Mammary epithelial cell (primary cell): ENCODE measurements at regions of chr9 and their contacts with region 1.

Region 1: DNA sequence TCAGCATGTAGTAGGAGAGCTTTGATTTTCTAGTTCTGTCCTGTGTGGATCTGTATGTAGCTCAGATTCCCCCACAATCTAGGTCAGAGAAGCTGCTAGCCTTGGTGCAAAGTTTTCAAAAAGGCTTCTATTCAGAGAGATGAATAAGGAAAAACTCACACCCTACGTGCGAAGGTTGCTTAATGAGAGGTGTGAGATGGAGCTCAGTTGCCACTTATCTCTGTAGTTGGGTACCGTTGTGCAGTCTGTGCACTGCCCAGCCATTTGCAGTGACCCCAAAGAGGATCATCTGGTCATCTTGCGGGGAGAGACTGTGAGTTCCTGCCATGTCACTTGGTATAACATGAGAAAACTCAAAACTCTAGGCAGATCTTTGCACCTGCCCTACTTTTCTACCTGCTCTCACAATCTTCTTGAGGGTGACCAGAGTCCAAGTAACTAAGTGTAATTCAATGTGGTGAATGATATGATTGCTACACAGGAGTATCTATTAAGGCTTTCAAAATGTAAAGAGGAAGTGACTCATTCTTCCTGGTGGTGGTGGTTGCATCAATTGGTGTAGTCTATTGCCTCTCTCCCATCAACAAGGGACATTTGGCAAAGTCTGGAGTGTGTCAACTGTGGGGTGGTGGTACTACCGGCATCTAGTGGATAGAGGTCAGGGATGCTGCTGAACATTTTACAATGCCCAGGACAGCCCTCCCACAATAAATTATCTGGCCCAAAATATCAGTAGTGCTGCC is 65.2 kb downstream of the TMC1 start:
- DNase-seq: peak; percentile 90
- H3K4me3 ChIP-seq: no peak overlapping the region
- H3K27ac ChIP-seq: peak overlapping the region; percentile 13
- H3K4me1 ChIP-seq: peaks cover 20% of the 10 kb centered on the region
- H3K27me3 ChIP-seq: no peaks in the 10 kb centered on the region
- CTCF ChIP-seq: peak; percentile 17 to 47

Region 2: GRCh38 chr9:71916834-71917534 is 669.6 kb before region 1 on chr9:
- CTCF ChIA-PET with region 1: no interaction called
- dilution Hi-C with region 1: no loop called
- in situ Hi-C with region 1: no loop called
- intact Hi-C with region 1: no loop called
- DNase-seq: no peak
- H3K4me3 ChIP-seq: no peak overlapping the region
- H3K27ac ChIP-seq: no peak overlapping the region
- H3K4me1 ChIP-seq: peaks cover 25% of the 10 kb centered on the region
- H3K27me3 ChIP-seq: no peaks in the 10 kb centered on the region
- CTCF ChIP-seq: no peak

Region 3: DNA sequence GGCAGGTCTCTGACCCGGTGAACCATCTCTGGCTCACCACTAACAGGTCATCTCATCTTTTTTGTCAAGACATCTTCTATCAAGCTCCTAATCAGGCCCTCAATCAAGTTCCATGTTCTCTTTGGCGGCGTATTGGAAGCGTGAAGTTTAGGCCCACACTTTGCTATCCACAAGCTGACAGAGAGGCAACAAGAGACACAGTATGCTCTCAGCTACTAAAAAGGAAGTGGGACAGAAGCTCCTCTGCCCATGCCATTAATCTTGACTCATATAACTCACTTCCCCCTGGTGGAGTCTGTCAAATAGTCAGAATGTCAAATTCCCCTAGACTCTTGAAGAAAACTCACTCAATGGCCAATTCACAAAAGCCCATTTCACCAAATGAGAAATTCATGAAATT is 142.7 kb before region 1 on chr9:
- CTCF ChIA-PET with region 1: no interaction called
- dilution Hi-C with region 1: no loop called
- in situ Hi-C with region 1: no loop called
- intact Hi-C with region 1: loop called (anchors 2 kb)
- DNase-seq: peak; percentile 37
- H3K4me3 ChIP-seq: no peak overlapping the region
- H3K27ac ChIP-seq: no peak overlapping the region
- H3K4me1 ChIP-seq: peaks cover 41% of the 10 kb centered on the region
- H3K27me3 ChIP-seq: no peaks in the 10 kb centered on the region
- CTCF ChIP-seq: no peak

Region 4: GRCh38 chr9:72462340-72462739 is 124.2 kb before region 1 on chr9:
- CTCF ChIA-PET with region 1: no interaction called
- dilution Hi-C with region 1: no loop called
- in situ Hi-C with region 1: no loop called
- intact Hi-C with region 1: no loop called
- DNase-seq: no peak
- H3K4me3 ChIP-seq: no peak overlapping the region
- H3K27ac ChIP-seq: no peak overlapping the region
- H3K4me1 ChIP-seq: no peaks in the 10 kb centered on the region
- H3K27me3 ChIP-seq: no peaks in the 10 kb centered on the region
- CTCF ChIP-seq: no peak

Region 5: DNA sequence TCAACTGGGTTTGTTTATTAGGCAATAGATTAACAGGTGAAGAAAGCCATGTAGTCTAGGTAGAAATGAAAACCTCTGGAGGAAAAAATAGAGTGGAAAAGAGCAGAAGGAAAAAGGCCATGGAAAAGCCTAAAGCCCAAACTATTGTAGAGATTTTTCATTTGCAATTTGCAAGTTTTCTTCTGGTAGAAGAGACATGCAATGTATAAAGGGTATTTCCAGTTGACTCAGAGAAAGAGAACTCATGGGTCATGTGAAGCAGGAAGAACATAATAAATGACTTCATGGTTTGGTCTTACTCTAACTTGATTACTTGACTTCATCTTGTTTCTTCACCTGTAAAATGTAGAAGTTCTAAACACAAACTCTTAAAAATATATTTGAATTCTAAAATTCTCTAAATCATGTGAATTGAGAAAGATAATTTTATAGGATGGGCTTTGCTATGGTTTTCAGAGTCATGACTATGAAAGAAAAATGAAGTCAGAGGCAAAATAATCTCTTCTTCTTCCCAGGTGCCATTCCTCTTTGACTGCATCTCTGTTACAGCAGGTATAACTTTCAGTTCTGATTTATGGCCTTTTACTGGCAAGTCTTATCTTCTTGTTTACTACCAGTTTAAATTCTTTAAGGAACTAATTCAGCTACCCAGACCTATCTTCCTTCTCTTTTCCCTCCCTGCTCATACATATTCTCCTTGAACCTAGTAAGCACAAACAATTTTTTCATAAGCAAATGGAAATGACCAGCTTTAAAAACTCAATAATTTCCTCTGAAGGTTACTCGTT is 112.9 kb before region 1 on chr9:
- CTCF ChIA-PET with region 1: interaction called, 6 read pairs
- dilution Hi-C with region 1: no loop called
- in situ Hi-C with region 1: no loop called
- intact Hi-C with region 1: loop called (anchors 2 kb)
- DNase-seq: peak; percentile 73
- H3K4me3 ChIP-seq: no peak overlapping the region
- H3K27ac ChIP-seq: no peak overlapping the region
- H3K4me1 ChIP-seq: peaks cover 41% of the 10 kb centered on the region
- H3K27me3 ChIP-seq: no peaks in the 10 kb centered on the region
- CTCF ChIP-seq: no peak

Region 6: GRCh38 chr9:72509635-72510034 is 76.9 kb before region 1 on chr9:
- CTCF ChIA-PET with region 1: no interaction called
- dilution Hi-C with region 1: no loop called
- in situ Hi-C with region 1: loop called in 1 of 2 experiments (anchors 10 kb)
- intact Hi-C with region 1: no loop called
- DNase-seq: peak; percentile 64
- H3K4me3 ChIP-seq: no peak overlapping the region
- H3K27ac ChIP-seq: peak overlapping the region; percentile 62
- H3K4me1 ChIP-seq: peaks cover 8% of the 10 kb centered on the region
- H3K27me3 ChIP-seq: no peaks in the 10 kb centered on the region
- CTCF ChIP-seq: no peak

Region 7: GRCh38 chr9:72526901-72527800 is 59.4 kb before region 1 on chr9:
- CTCF ChIA-PET with region 1: no interaction called
- dilution Hi-C with region 1: loop called (anchors 10 kb)
- in situ Hi-C with region 1: no loop called
- intact Hi-C with region 1: loop called (anchors 1 kb)
- DNase-seq: peak; percentile 88
- H3K4me3 ChIP-seq: no peak overlapping the region
- H3K27ac ChIP-seq: peak overlapping the region; percentile 44
- H3K4me1 ChIP-seq: peaks cover 31% of the 10 kb centered on the region
- H3K27me3 ChIP-seq: no peaks in the 10 kb centered on the region
- CTCF ChIP-seq: no peak

Region 8: DNA sequence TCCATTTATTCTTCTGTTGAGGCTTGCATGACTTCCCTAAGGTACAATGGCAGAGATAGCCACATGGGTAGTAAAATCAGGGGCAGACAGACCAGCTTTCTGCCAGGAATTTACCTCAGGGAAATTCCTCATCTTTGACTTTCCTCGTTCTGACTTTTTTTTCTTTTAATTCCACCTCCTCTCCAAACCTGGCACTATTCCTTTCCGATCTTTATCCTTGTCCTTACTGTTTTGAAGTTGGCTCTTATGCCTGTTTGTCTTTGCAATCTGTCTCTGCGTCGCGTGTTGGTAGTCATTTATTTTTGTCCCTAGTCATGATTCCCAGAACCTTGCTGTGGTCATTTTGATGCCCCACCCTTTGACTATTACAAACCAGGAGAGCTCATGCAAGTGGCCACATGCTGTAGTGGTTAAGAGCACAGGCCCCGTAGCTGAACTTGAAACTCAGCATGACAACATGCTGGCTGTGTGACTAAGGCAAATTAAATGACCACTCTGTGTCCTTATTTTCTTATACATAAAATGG is 46.1 kb before region 1 on chr9:
- CTCF ChIA-PET with region 1: no interaction called
- dilution Hi-C with region 1: loop called (anchors 10 kb)
- in situ Hi-C with region 1: no loop called
- intact Hi-C with region 1: loop called (anchors 2 kb)
- DNase-seq: peak; percentile 96
- H3K4me3 ChIP-seq: no peak overlapping the region
- H3K27ac ChIP-seq: peak overlapping the region; percentile 95
- H3K4me1 ChIP-seq: peaks cover 34% of the 10 kb centered on the region
- H3K27me3 ChIP-seq: no peaks in the 10 kb centered on the region
- CTCF ChIP-seq: no peak

Region 9: DNA sequence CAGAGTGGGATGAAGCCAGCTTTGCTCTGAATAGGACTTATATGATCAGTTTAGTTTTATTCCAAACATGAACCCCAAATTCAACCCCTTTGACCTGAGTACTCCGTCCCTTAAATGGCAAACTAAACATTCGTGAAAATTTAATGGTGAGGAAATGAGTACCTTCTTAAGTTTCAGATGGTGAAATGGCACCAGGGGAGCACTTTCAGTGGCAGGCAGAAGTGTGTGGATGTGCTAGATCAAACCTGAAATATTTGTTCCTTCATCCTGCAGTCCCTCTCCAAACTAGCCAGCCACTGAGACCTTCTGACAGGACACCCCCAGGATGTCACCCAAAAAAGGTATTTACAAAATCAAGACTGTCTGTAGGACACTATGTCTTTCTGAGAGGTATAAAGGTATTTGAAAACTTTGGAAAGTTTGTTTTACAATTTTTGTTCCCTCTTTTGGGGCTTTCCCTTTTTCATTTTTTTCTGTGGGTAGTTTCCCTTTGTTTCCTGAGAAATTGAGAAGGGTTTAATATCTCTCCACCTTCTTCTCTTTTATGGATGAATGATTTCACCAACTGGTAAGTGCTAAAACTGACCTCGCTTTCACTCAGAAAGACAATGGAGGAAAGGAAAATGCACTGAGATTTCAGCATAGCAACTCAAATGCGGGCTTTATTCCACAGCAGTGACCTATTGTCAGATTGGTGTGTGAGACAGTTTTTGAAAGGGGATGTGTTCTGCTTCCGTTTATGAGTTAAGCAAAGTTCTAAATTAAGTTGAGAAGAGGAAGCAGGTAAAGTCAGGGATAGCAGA is 62.0 kb after region 1 on chr9:
- CTCF ChIA-PET with region 1: no interaction called
- dilution Hi-C with region 1: no loop called
- in situ Hi-C with region 1: no loop called
- intact Hi-C with region 1: no loop called
- DNase-seq: no peak
- H3K4me3 ChIP-seq: no peak overlapping the region
- H3K27ac ChIP-seq: peak overlapping the region; percentile 61
- H3K4me1 ChIP-seq: peaks cover 18% of the 10 kb centered on the region
- H3K27me3 ChIP-seq: no peaks in the 10 kb centered on the region
- CTCF ChIP-seq: no peak